HEK293T (cell line): ENCODE measurements at regions of chr5 and their contacts with region 1.

Region 1: DNA sequence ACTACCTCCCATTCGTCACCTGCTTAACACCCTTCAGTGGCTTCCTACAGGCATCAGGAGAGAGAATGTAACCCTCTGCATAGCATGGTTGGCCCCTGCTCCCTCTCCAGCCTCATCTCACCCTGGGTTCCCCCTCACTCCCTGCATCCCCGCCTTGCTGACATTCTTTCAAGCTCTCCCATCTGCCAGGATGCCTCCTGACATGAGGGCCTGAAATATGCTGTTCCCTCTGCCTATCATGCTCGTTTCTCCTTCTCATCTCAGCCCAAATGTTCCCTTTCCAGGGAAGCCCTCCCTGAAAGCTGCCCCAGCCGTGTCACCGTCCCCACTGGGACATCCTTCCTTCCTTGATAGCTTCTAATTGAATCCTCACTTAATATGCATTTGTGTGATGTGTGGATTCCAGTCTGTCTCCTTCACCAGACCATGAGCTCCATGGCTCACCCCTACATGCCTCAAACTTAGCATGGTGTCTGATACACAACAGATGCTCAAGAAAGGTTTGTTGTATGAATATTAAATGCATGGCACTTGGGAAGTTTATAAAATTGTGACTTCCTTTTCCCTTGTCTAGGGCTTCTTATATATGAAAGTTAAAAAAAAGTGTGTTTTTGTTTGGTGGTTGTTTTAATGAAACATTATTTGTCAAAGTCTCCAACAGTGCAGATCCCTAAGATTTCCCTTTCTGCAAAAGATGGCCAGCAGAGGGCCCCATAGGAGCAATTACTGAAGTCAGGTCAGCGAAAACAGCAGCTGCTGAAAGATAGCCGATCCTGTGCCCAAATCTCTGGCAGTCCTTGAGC is 7.3 kb upstream of the C5orf58 start:
- DNase-seq: peak; percentile 79

Region 2: GRCh38 chr5:170006021-170006420 is 219.5 kb before region 1 on chr5:
- CTCF ChIA-PET with region 1: no interaction called
- POLR2A ChIA-PET with region 1: no interaction called
- DNase-seq: no peak

Region 3: GRCh38 chr5:170109059-170110031 is 116.2 kb before region 1 on chr5:
- CTCF ChIA-PET with region 1: no interaction called
- POLR2A ChIA-PET with region 1: no interaction called
- DNase-seq: no peak

Region 4: DNA sequence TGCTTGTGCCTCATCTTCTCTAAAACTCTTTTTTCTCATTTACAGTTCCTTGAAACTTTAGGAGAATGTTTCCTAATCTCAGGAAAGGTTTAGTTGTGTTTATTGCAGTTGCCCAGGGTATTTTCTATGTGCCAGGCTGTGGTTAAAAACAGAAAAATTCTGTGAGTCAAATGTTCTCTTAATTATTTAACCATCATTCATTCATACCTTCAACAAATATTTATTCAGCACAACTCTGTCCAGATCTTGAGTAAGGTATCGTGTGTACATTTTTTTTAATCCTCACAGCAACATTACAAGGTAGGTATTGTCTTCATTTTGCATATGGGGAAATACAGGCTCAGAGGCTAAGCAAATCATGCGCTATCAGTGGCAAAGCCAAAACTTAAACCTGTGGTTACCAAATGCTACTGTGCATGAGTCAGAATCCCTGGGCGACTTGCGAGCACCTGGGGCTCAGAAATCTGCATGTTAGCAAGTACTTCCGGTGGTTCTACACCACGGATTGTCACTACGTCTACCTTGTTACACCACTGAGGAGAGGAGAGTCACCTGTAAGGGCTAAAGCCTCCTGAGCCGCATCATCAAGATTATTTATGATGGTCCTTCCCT is 28.4 kb after region 1 on chr5:
- CTCF ChIA-PET with region 1: no interaction called
- POLR2A ChIA-PET with region 1: no interaction called
- DNase-seq: no peak

Region 5: GRCh38 chr5:170338933-170339779 is 113.6 kb after region 1 on chr5:
- CTCF ChIA-PET with region 1: interaction called, 14 read pairs
- POLR2A ChIA-PET with region 1: no interaction called
- DNase-seq: no peak

Region 6: DNA sequence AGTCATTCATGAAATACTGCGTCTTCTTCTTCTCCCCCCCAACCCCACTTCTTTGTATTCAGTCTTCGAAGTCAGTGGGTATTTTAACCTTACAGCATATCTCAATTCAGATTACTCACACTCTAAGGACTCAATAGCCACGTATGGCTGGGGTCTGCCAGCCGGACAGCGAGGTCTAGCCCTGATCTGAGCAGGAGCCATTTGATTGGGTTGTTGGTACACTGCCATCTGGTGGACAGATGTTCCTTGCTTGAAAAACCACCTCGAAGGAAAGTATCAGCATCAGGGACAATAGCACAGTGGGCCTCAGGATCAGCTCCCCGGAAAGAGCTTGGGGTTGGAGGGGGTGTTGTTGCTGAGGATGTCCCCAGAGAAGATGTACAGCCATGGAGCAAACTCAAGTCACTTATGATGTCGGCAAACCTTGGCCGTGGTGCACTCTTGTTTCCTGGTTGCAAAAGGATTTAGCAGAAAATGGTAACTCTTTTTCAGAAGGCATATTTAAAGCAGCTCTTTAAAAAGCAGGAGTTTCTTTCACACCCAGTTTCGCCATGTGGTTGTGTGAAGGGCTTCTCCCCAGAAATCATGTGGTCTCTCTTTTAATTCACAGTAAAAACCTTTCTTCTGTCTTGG is 195.4 kb after region 1 on chr5:
- CTCF ChIA-PET with region 1: interaction called, 16 read pairs
- POLR2A ChIA-PET with region 1: no interaction called
- DNase-seq: peak; percentile 89

Region 7: GRCh38 chr5:170426149-170426767 is 200.7 kb after region 1 on chr5:
- CTCF ChIA-PET with region 1: interaction called, 16 read pairs
- POLR2A ChIA-PET with region 1: no interaction called
- DNase-seq: no peak